Activated CD4-positive, alpha-beta T cell treated with anti-CD3 and anti-CD28 coated beads for 36 hours (primary cell): ENCODE measurements at regions of chr12 and their contacts with region 1.

Region 1: GRCh38 chr12:39541471-39541870 is 78.1 kb downstream of the ABCD2 start:
- DNase-seq: no peak
- ATAC-seq: no peak
- H3K4me3 Mint-ChIP-seq: no peak overlapping the region
- H3K27ac Mint-ChIP-seq: no peak overlapping the region
- H3K4me1 Mint-ChIP-seq: no peaks in the 10 kb centered on the region
- H3K27me3 Mint-ChIP-seq: no peaks in the 10 kb centered on the region

Region 2: DNA sequence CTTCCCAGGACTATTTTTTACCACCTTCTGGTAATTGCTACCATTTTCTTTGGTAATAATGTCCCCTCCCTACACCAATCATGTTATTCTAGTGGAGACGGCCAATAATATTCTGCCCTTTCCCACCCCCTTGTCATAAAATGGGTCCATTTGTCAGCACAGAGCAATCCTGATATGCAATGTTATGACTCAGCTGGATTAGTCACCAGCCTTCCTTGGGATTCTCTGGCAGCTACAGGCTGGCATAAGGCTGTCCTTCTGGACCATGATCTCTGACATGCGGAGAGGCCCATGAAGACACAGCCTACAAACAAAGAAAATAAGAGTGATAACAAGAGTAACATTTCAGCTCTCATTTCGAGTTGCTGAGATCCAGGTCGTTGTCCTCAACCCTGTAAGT is 414.1 kb before region 1 on chr12:
- CTCF ChIA-PET with region 1: no interaction called
- POLR2A ChIA-PET with region 1: no interaction called
- intact Hi-C with region 1: no loop called
- DNase-seq: no peak
- ATAC-seq: no peak
- H3K4me3 Mint-ChIP-seq: no peak overlapping the region
- H3K27ac Mint-ChIP-seq: no peak overlapping the region
- H3K4me1 Mint-ChIP-seq: no peaks in the 10 kb centered on the region
- H3K27me3 Mint-ChIP-seq: peaks cover 2% of the 10 kb centered on the region

Region 3: GRCh38 chr12:39393890-39394289 is 147.6 kb before region 1 on chr12:
- CTCF ChIA-PET with region 1: no interaction called
- POLR2A ChIA-PET with region 1: no interaction called
- intact Hi-C with region 1: no loop called
- DNase-seq: no peak
- ATAC-seq: no peak
- H3K4me3 Mint-ChIP-seq: no peak overlapping the region
- H3K27ac Mint-ChIP-seq: no peak overlapping the region
- H3K4me1 Mint-ChIP-seq: no peaks in the 10 kb centered on the region
- H3K27me3 Mint-ChIP-seq: no peaks in the 10 kb centered on the region

Region 4: GRCh38 chr12:39483042-39483441 is 58.4 kb before region 1 on chr12:
- CTCF ChIA-PET with region 1: no interaction called
- POLR2A ChIA-PET with region 1: interaction called, 12 read pairs
- intact Hi-C with region 1: no loop called
- DNase-seq: no peak
- ATAC-seq: no peak
- H3K4me3 Mint-ChIP-seq: no peak overlapping the region
- H3K27ac Mint-ChIP-seq: no peak overlapping the region
- H3K4me1 Mint-ChIP-seq: no peaks in the 10 kb centered on the region
- H3K27me3 Mint-ChIP-seq: no peaks in the 10 kb centered on the region

Region 5: DNA sequence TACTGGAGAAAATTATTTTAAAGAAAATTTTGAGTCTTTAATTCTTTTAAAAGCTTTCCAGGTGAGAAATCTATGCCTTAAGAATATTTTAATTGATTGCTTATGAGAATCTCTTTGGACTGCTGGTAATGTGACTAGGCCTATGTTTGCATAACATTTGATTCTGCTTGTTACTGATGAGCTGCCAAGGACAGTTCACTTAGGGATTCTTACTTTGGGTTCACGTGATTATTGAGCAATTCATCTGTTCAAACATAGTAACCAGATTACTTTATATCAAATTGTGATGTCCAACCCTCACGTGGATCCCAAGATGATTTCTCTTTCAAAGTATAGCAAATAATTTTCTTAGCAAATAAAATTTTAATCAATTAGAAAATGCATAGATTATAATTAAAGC is 105.5 kb after region 1 on chr12:
- CTCF ChIA-PET with region 1: no interaction called
- POLR2A ChIA-PET with region 1: no interaction called
- intact Hi-C with region 1: no loop called
- DNase-seq: no peak
- ATAC-seq: no peak
- H3K4me3 Mint-ChIP-seq: no peak overlapping the region
- H3K27ac Mint-ChIP-seq: no peak overlapping the region
- H3K4me1 Mint-ChIP-seq: peaks cover 8% of the 10 kb centered on the region
- H3K27me3 Mint-ChIP-seq: no peaks in the 10 kb centered on the region